ENCODE measurements at regions of chr19 and their contacts with region 1.

Region 1: GRCh38 chr19:14496028-14496833 is at the start of gene GIPC1:
- DNase-seq: peak; percentile 96 to 99 (median 98)
- H3K4me3 ChIP-seq: peak within 1 kb of the TSS; percentile 71 to 98 (median 91)
- H3K27ac ChIP-seq: peak within 1 kb of the TSS; percentile 73 to 99 (median 97)
- H3K27me3 ChIP-seq: no peaks in the 10 kb centered on the region
- CTCF ChIP-seq: peak in 15 of 56 donors; percentile 5 to 40 (median 21)
- total RNA-seq, gene GIPC1: 54.9 to 112 (median 87.4) TPM

Region 2: GRCh38 chr19:13794757-13795589 is 701.3 kb before region 1 on chr19 and contains the start of gene ZSWIM4:
- intact Hi-C with region 1: loop called in 1 of 2 experiments (anchors 10 kb)
- DNase-seq: peak; percentile 97 to 99 (median 99)
- H3K4me3 ChIP-seq: peak within 1 kb of the TSS; percentile 55 to 91 (median 78)
- H3K27ac ChIP-seq: peak within 1 kb of the TSS in 46 of 59 donors; percentile 3 to 89 (median 74)
- H3K27me3 ChIP-seq: no peaks in the 10 kb centered on the region
- CTCF ChIP-seq: peak in 10 of 56 donors; percentile 5 to 45 (median 16)
- total RNA-seq, gene ZSWIM4: 4.0 to 10.0 (median 6.6) TPM

Region 3: DNA sequence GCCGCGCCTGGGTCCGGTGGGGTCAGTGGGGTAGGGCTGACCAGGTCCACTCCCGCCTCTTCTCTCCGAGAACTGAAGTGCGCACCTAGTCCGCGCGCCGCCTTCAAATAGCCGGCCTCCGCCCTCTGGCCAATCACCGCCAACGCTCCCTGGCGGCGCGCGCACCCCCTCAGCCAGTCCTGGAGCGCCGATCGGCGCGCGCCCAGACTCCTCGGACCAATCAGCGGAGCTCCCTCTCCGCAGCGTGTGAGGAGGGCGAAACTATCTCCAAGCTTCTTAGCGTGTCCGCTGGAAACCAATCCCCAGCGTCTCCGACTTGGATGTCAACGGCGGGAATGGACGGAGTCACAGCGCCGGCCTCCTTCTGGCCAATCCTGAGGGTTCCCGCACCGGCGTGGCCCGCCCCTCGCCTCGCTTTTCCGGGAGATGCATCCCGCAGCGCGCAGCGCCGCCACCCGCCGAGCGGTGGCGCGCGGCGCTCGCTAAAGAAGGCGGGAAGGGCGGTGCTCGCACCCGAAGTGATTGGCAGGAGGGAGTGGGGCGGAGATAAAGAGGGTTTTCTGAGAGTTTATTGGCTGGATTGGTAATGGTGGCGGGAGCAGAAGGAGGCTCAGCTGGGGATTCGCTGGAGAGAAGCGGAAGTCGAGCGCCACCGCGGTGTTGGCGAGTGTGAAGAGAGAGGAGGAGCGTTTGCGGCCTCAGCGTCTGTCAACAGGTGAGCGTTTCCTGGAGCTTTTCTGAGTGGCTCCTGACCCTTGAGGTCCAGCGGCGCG is 359.5 kb before region 1 on chr19 and contains the start of gene ASF1B:
- intact Hi-C with region 1: loop called in 1 of 2 experiments (anchors 5 kb)
- DNase-seq: peak; percentile 96 to 100 (median 99)
- H3K4me3 ChIP-seq: peak within 1 kb of the TSS; percentile 56 to 96 (median 83)
- H3K27ac ChIP-seq: peak within 1 kb of the TSS in 58 of 59 donors; percentile 40 to 96 (median 88)
- H3K27me3 ChIP-seq: no peaks in the 10 kb centered on the region
- CTCF ChIP-seq: peak; percentile 88 to 100 (median 98)
- total RNA-seq, gene ASF1B: 0.22 to 2.4 (median 0.63) TPM in 55 of 120 experiments, not detected in the others

Region 4: DNA sequence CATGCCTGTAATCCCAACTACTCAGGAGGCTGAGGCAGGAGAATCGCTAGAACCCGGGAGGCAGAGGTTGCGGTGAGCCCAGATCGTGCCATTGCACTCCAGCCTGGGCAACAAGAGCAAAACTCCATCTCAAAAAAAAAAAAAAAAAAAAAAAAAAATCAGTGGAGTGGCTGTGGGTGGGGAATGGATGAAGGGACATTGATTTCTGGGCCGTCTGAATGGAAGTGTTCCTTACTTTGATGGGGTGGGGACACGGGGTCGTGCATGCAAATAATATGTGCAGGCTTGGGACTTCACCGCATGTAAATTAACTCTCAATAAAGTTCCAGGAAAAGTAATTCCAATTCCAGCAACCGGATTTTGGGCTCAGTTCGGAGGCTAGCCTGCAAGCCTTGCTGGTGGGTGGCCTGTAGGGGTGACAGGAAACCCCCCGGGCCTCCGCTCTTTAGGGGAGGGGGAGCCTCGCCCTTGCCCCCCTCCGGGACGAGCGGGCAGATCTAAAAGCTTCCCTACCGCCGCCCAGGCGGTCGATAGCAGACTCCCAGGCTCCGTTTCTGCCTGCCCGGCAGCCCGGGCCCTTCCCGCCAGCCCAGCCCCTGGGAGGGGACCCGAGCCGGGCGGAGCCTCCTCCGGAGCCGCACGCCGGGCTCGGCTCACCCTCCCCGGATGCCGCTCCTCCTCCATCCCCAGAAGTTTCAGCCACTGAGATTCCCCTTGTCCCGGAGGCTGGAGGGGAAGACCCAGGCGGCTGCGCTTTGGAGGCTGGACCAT is 162.9 kb before region 1 on chr19:
- intact Hi-C with region 1: no loop called
- DNase-seq: no peak
- H3K4me3 ChIP-seq: peak overlapping the region in 56 of 59 donors; percentile 2 to 56 (median 40)
- H3K27ac ChIP-seq: no peak overlapping the region
- H3K27me3 ChIP-seq: peaks cover 0 to 16% (median 0%) of the 10 kb centered on the region in 45 donors
- CTCF ChIP-seq: no peak

Region 5: GRCh38 chr19:14517840-14518505 is 21.7 kb after region 1 on chr19 and contains the start of gene DNAJB1:
- intact Hi-C with region 1: loop called (anchors 1 kb)
- DNase-seq: peak; percentile 63 to 90 (median 78)
- H3K4me3 ChIP-seq: peak within 1 kb of the TSS; percentile 77 to 100 (median 97)
- H3K27ac ChIP-seq: peak within 1 kb of the TSS; percentile 99 to 100 (median 100)
- H3K27me3 ChIP-seq: no peaks in the 10 kb centered on the region
- CTCF ChIP-seq: peak in 6 of 56 donors; percentile 2 to 42 (median 16)
- total RNA-seq, gene DNAJB1: 67.5 to 1,486 (median 107) TPM

Region 6: DNA sequence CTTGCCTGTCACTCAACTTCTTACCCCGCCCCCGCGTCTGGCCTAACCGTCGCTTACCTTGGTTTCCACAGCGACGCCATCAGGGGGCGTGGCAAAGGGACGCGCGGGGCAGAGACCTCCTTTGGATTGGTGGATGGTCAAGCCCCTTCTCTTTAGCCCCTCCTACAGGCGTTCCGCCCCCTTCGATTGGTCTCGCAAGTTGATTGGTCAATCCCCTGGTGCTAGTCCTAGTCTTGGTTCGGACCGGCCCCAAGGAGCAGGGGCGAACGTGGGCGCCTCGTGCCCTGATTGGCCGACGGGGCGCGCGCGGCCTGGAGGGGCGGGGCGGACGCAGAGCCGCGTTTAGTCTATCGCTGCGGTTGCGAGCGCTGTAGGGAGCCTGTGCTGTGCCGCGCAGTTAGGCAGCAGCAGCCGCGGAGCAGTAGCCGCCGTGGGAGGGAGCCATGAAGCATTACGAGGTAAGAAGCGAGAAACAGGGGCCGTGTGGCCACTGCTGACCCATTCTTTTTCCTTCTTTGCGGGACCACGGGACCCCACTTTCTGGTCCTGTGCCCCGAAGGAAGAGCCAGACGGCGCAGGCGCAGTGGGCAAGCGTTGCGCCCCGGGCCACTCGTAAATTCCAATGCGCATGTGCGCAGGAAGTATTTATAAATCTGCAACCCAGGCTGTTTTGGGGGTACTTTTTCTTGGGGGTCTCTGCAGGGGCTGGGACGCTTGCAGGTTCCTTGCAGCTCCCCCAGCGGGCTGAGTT is 33.2 kb after region 1 on chr19 and contains the start of gene TECR:
- intact Hi-C with region 1: loop called in 1 of 2 experiments (anchors 1 kb)
- DNase-seq: peak; percentile 99 to 100 (median 100)
- H3K4me3 ChIP-seq: peak within 1 kb of the TSS; percentile 61 to 100 (median 92)
- H3K27ac ChIP-seq: peak within 1 kb of the TSS; percentile 80 to 99 (median 95)
- H3K27me3 ChIP-seq: no peaks in the 10 kb centered on the region
- CTCF ChIP-seq: peak in 39 of 56 donors; percentile 8 to 63 (median 38)
- total RNA-seq, gene TECR: 169 to 287 (median 205) TPM

Region 7: DNA sequence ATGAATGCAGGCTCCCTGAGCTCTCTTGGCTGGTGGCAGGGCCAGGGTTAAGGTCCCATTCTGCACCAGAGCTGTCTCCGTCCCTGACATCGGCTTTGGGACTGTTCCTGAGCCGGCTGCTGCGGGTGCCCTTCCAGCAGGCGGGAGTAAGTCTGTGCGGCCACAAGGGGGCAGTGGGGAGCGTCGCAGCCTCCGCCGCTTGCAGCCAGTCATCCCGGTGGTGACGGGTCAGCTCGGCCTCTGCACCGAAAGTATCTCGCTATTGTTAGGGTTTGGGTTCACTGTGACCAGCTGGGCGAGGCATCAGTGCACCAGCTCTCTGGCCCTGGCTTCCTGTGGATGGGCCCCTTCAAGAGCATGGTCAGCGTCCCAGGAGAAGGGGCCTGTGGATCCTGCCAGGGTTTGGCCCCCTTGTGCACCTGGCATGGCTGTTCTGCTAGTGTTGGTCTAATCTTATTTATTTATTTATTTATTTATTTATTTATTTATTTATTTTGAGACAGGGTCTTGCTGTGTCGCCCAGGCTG is 60.5 kb after region 1 on chr19:
- intact Hi-C with region 1: loop called in 1 of 2 experiments (anchors 5 kb)
- DNase-seq: peak; percentile 73 to 87 (median 79)
- H3K4me3 ChIP-seq: peak overlapping the region in 53 of 59 donors; percentile 1 to 56 (median 31)
- H3K27ac ChIP-seq: peak overlapping the region in 58 of 59 donors; percentile 20 to 97 (median 86)
- H3K27me3 ChIP-seq: no peaks in the 10 kb centered on the region
- CTCF ChIP-seq: peak; percentile 72 to 98 (median 95)